HCT116 (cell line): ENCODE measurements at regions of chr3 and their contacts with region 1.

Region 1: GRCh38 chr3:129942296-129942695 is 32.2 kb upstream of the TRH start:
- DNase-seq: peak; percentile 65
- ATAC-seq: peak; percentile 97
- H3K4me3 ChIP-seq: no peak overlapping the region
- H3K27ac ChIP-seq: no peak overlapping the region
- H3K4me1 ChIP-seq: peaks cover 0 to 3% of the 10 kb centered on the region in 2 experiments; a peak in 1 of 4 replicates
- H3K27me3 ChIP-seq: no peaks in the 10 kb centered on the region
- CTCF ChIP-seq: peak; percentile 76 to 98 (median 87)
- POLR2A ChIP-seq: no peak
- RAD21 ChIP-seq: peak; percentile 99

Region 2: DNA sequence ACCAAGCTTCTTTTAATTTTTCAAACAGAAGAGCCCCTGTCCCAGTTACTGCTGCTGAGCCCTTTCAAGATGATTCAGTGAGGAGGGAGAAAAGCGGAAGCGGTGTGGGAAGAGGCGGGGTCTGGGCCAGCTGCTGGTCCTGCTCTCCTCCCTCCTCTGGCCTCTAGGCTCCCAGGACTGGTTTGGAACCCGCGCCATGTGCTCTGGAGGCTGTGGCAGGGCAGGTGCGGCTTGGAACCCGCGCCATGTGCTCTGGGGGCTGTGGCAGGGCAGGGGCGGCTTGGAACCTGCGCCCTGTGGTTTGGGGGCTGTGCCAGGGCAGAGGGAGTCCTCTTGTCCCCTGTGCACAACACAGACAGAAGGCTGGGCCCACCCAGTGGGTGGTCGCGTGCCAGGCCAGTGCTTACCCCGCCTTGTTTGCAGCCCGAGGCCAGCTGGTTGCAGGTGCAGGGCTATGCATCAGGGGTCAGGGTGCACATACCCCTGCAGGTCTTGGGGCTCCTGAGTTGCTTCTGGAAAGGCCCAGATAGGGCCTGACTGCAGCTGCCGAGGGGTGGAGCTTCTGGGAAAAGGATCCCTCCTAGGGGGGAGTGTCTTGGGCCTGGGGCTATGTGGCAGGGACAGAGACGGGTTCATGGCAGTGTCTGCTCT is 151.6 kb after region 1 on chr3:
- CTCF ChIA-PET with region 1: interaction called, 49 read pairs
- POLR2A ChIA-PET with region 1: interaction called, 3 read pairs
- RAD21 ChIA-PET with region 1: interaction called, 8 to 10 read pairs
- intact Hi-C with region 1: no loop called
- DNase-seq: no peak
- ATAC-seq: peak; percentile 85
- H3K4me3 ChIP-seq: peak overlapping the region; percentile 42 to 56
- H3K27ac ChIP-seq: peak overlapping the region; percentile 72
- H3K4me1 ChIP-seq: peaks cover 10 to 22% of the 10 kb centered on the region in 2 experiments; a peak in 3 of 4 replicates
- H3K27me3 ChIP-seq: no peaks in the 10 kb centered on the region
- CTCF ChIP-seq: no peak
- POLR2A ChIP-seq: no peak
- RAD21 ChIP-seq: no peak

Region 3: GRCh38 chr3:130111185-130111864 is 169.0 kb after region 1 on chr3:
- CTCF ChIA-PET with region 1: interaction called, 46 read pairs
- POLR2A ChIA-PET with region 1: interaction called, 3 read pairs
- RAD21 ChIA-PET with region 1: no interaction called
- intact Hi-C with region 1: loop called (anchors 1 kb)
- DNase-seq: peak; percentile 93
- ATAC-seq: peak; percentile 99
- H3K4me3 ChIP-seq: peak overlapping the region; percentile 74 to 79
- H3K27ac ChIP-seq: peak overlapping the region; percentile 76
- H3K4me1 ChIP-seq: peaks cover 16 to 25% of the 10 kb centered on the region in 2 experiments
- H3K27me3 ChIP-seq: no peaks in the 10 kb centered on the region
- CTCF ChIP-seq: no peak
- POLR2A ChIP-seq: peak; percentile 30
- RAD21 ChIP-seq: no peak